Activated CD4-positive, alpha-beta T cell treated with anti-CD3 and anti-CD28 coated beads, Interleukin-2, amount 10 ng/mL, durations not matched to agents 24 days and 14 days (primary cell): ENCODE measurements at regions of chr19 and their contacts with region 1.

Region 1: DNA sequence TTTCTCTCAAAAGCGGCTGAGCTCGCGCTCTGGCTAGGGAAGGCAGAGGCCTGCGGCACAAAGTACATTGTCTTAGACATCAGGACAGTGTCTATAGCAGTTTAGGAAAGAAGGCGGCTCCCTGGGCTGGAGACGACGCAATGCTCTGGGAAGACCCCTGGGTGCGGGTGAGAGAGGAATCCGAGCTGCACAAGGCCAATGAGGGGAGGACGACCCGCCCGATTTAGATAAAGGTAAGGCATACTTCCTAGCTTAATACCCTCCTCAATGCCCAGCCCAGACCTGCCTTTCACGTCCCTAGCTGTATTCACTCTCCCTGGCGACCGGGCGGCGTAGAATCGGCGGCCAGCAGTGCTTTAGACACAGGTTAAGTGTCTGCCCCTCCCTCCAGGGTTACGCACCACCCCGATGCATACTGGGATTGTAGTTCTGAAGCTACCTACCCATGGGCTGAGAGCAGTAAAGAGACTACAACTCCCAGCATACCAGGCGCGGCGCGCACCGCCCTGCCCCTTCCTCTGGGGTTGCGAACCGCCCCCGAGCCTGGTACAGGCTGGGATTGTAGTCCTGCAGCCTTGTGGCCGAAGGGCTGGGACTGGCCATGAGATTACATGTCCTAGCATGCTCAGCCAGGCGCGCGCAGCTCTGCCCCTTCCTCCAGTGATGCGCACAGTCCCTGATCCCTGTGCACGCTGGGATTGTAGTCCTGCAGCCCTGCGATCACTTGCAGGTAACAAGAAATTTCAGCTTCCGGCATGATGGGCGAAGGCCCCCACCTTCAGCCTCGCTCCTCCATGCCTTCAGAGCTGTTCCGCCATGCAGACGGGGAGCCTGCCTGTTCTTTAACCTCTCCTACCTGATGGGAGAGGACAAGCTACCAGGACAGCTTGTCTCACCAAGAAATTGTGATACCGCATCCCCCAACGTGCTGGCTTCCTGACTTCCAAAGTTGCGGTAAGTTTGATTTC is 43.4 kb upstream of the ZNF14 start:
- DNase-seq: peak; percentile 98
- H3K4me3 Mint-ChIP-seq: peak overlapping the region; percentile 93
- H3K27ac Mint-ChIP-seq: peak overlapping the region; percentile 85
- H3K4me1 Mint-ChIP-seq: peaks cover 24% of the 10 kb centered on the region
- H3K27me3 Mint-ChIP-seq: no peaks in the 10 kb centered on the region

Region 2: GRCh38 chr19:19821366-19821951 is 45.1 kb after region 1 on chr19 and contains the start of gene ZNF506:
- intact Hi-C with region 1: loop called (anchors 1 kb)
- DNase-seq: peak; percentile 97
- H3K4me3 Mint-ChIP-seq: peak within 1 kb of the TSS; percentile 98
- H3K27ac Mint-ChIP-seq: peak within 1 kb of the TSS; percentile 99
- H3K4me1 Mint-ChIP-seq: peaks cover 12% of the 10 kb centered on the region
- H3K27me3 Mint-ChIP-seq: no peaks in the 10 kb centered on the region
- total RNA-seq, gene ZNF506: 13.3 and 16.2 TPM in 2 replicates

Region 3: DNA sequence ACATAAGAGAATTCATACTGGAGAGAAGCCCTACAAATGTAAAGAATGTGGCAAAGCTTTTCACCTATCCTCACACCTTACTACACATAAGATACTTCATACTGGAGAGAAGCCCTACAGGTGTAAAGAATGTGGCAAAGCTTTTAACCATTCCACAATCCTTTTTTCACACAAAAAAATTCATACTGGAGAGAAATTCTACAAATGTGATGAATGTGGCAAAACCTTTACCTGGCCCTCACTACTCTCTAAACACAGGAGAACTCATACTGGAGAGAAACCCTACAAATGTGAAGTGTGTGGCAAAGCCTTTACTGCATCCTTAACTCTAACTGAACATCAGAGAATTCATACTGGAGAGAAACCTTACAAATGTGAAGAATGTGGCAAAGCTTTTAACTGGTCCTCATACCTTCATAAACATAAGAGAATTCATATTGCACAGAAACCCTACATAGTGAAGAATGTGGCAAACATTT is 59.3 kb after region 1 on chr19:
- intact Hi-C with region 1: no loop called
- DNase-seq: no peak
- H3K4me3 Mint-ChIP-seq: no peak overlapping the region
- H3K27ac Mint-ChIP-seq: no peak overlapping the region
- H3K4me1 Mint-ChIP-seq: no peaks in the 10 kb centered on the region
- H3K27me3 Mint-ChIP-seq: no peaks in the 10 kb centered on the region